ENCODE measurements at regions of chr9 and their contacts with region 1.

Region 1: GRCh38 chr9:116641292-116642059 is 45.6 kb upstream of the TRIM32 start:
- DNase-seq: no peak
- H3K4me3 ChIP-seq: no peak overlapping the region
- H3K27me3 ChIP-seq: no peaks in the 10 kb centered on the region
- CTCF ChIP-seq: no peak

Region 2: GRCh38 chr9:116605904-116606341 is 35.6 kb before region 1 on chr9:
- CTCF ChIA-PET with region 1: no interaction called
- POLR2A ChIA-PET with region 1: interaction called, 17 read pairs
- DNase-seq: no peak
- H3K4me3 ChIP-seq: no peak overlapping the region
- H3K27me3 ChIP-seq: no peaks in the 10 kb centered on the region
- CTCF ChIP-seq: no peak

Region 3: DNA sequence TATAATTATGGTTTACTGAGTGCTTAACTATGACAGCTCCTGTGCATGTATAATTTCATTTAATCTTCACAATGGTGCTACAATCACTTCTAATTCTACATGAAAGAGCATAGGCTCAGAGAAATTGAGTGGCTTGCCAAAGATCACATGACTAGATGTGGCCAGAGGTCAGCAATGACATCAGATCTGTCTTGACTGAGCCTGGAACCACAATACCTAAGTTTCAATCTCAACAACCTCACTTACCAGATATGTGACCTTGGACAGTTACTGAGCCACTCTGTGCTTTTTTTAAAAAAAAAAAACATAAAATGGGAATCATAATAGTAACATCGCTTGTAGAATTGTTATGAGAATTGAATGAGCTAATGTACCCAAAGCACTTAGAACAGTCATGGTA is 176.3 kb after region 1 on chr9:
- CTCF ChIA-PET with region 1: no interaction called
- POLR2A ChIA-PET with region 1: no interaction called
- DNase-seq: no peak
- H3K4me3 ChIP-seq: no peak overlapping the region
- H3K27me3 ChIP-seq: no peaks in the 10 kb centered on the region
- CTCF ChIP-seq: no peak